ENCODE measurements at regions of chr12 and their contacts with region 1.

Region 1: GRCh38 chr12:93979189-93979588 is 169.2 kb upstream of the PLXNC1 start:
- DNase-seq: peak; percentile 8
- ATAC-seq: peak; percentile 42; the same call in 2 of the 3 replicates
- H3K4me3 ChIP-seq: no peak overlapping the region
- H3K27ac ChIP-seq: no peak overlapping the region
- H3K4me1 ChIP-seq: no peaks in the 10 kb centered on the region
- H3K27me3 ChIP-seq: no peaks in the 10 kb centered on the region; a peak in 2 of 4 replicates
- CTCF ChIP-seq: peak; percentile 51 to 65 (median 55)
- EP300 ChIP-seq: no peak
- POLR2A ChIP-seq: no peak
- RAD21 ChIP-seq: peak; percentile 84

Region 2: DNA sequence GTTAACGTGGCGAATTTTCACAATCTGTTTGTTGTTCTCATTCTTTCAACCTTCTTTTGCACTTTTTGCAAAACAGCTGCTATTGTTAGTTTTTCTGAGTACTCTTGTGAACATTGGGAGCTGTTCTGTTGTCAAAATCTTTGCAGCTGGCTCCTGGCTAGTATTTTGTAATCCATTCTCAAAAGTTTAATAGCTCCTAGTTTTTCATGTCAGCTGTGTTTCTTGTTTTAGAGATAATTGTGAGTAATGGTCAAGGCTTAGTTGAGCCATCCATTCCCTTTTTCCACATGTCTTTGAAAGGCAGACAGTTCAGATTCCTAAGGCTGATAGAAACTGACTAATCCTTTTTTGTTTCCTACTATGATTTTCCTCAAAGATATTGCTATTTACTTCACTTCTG is 341.1 kb before region 1 on chr12:
- CTCF ChIA-PET with region 1: no interaction called
- POLR2A ChIA-PET with region 1: no interaction called
- RAD21 ChIA-PET with region 1: no interaction called
- SMC1A ChIA-PET with region 1: no interaction called
- in situ Hi-C with region 1: no loop called
- intact Hi-C with region 1: no loop called
- DNase-seq: no peak
- ATAC-seq: no peak
- H3K4me3 ChIP-seq: no peak overlapping the region
- H3K27ac ChIP-seq: no peak overlapping the region
- H3K4me1 ChIP-seq: no peaks in the 10 kb centered on the region
- H3K27me3 ChIP-seq: no peaks in the 10 kb centered on the region
- CTCF ChIP-seq: no peak
- EP300 ChIP-seq: no peak
- POLR2A ChIP-seq: no peak
- RAD21 ChIP-seq: no peak

Region 3: GRCh38 chr12:93766796-93767523 is 212.2 kb before region 1 on chr12:
- CTCF ChIA-PET with region 1: interaction called, 9 read pairs
- POLR2A ChIA-PET with region 1: no interaction called
- RAD21 ChIA-PET with region 1: interaction called, 3 read pairs
- SMC1A ChIA-PET with region 1: interaction called, 4 read pairs
- in situ Hi-C with region 1: no loop called
- intact Hi-C with region 1: loop called (anchors 5 kb)
- DNase-seq: no peak
- ATAC-seq: peak; percentile 77
- H3K4me3 ChIP-seq: no peak overlapping the region
- H3K27ac ChIP-seq: no peak overlapping the region
- H3K4me1 ChIP-seq: no peaks in the 10 kb centered on the region
- H3K27me3 ChIP-seq: no peaks in the 10 kb centered on the region
- CTCF ChIP-seq: peak; percentile 19 to 57 (median 49); a peak in 4 of 6 replicates
- EP300 ChIP-seq: no peak
- POLR2A ChIP-seq: no peak
- RAD21 ChIP-seq: peak; percentile 74

Region 4: GRCh38 chr12:93879476-93880421 is 99.4 kb before region 1 on chr12:
- CTCF ChIA-PET with region 1: no interaction called
- POLR2A ChIA-PET with region 1: no interaction called
- RAD21 ChIA-PET with region 1: no interaction called
- SMC1A ChIA-PET with region 1: no interaction called
- in situ Hi-C with region 1: no loop called
- intact Hi-C with region 1: no loop called
- DNase-seq: no peak
- ATAC-seq: no peak
- H3K4me3 ChIP-seq: no peak overlapping the region
- H3K27ac ChIP-seq: no peak overlapping the region
- H3K4me1 ChIP-seq: no peaks in the 10 kb centered on the region
- H3K27me3 ChIP-seq: no peaks in the 10 kb centered on the region
- CTCF ChIP-seq: no peak
- EP300 ChIP-seq: no peak
- POLR2A ChIP-seq: no peak
- RAD21 ChIP-seq: no peak

Region 5: GRCh38 chr12:93894391-93895088 is 84.6 kb before region 1 on chr12:
- CTCF ChIA-PET with region 1: no interaction called
- POLR2A ChIA-PET with region 1: no interaction called
- RAD21 ChIA-PET with region 1: no interaction called
- SMC1A ChIA-PET with region 1: no interaction called
- in situ Hi-C with region 1: no loop called
- intact Hi-C with region 1: no loop called
- DNase-seq: no peak
- ATAC-seq: no peak
- H3K4me3 ChIP-seq: no peak overlapping the region
- H3K27ac ChIP-seq: no peak overlapping the region
- H3K4me1 ChIP-seq: no peaks in the 10 kb centered on the region
- H3K27me3 ChIP-seq: peaks cover 0 to 4% of the 10 kb centered on the region in 2 experiments; a peak in 2 of 4 replicates
- CTCF ChIP-seq: no peak
- EP300 ChIP-seq: no peak
- POLR2A ChIP-seq: no peak
- RAD21 ChIP-seq: no peak

Region 6: GRCh38 chr12:94062796-94063635 is 83.8 kb after region 1 on chr12:
- CTCF ChIA-PET with region 1: no interaction called
- POLR2A ChIA-PET with region 1: no interaction called
- RAD21 ChIA-PET with region 1: no interaction called
- SMC1A ChIA-PET with region 1: no interaction called
- in situ Hi-C with region 1: no loop called
- intact Hi-C with region 1: no loop called
- DNase-seq: no peak
- ATAC-seq: no peak
- H3K4me3 ChIP-seq: no peak overlapping the region
- H3K27ac ChIP-seq: no peak overlapping the region
- H3K4me1 ChIP-seq: no peaks in the 10 kb centered on the region
- H3K27me3 ChIP-seq: no peaks in the 10 kb centered on the region
- CTCF ChIP-seq: no peak
- EP300 ChIP-seq: no peak
- POLR2A ChIP-seq: no peak
- RAD21 ChIP-seq: no peak

Measured in GM12878 (cell line).